ENCODE measurements at regions of chr4 and their contacts with region 1.

Region 1: GRCh38 chr4:90127223-90127705 is at the start of gene CCSER1:
- DNase-seq: peak; percentile 78
- ATAC-seq: peak; percentile 79
- H3K4me3 ChIP-seq: peak within 1 kb of the TSS; percentile 76
- H3K27ac ChIP-seq: 0 out of 2 replicates have a peak within 1 kb of the TSS, but pooled peaks have one; percentile 12
- H3K4me1 ChIP-seq: peaks cover 8% of the 10 kb centered on the region
- H3K27me3 ChIP-seq: peaks cover 32% of the 10 kb centered on the region; the same call in 1 of the 2 replicates
- CTCF ChIP-seq: 0 out of 2 replicates have a peak, but pooled peaks have one; percentile 8
- total RNA-seq, gene CCSER1: 6.0 and 10.1 TPM in 2 replicates

Region 2: DNA sequence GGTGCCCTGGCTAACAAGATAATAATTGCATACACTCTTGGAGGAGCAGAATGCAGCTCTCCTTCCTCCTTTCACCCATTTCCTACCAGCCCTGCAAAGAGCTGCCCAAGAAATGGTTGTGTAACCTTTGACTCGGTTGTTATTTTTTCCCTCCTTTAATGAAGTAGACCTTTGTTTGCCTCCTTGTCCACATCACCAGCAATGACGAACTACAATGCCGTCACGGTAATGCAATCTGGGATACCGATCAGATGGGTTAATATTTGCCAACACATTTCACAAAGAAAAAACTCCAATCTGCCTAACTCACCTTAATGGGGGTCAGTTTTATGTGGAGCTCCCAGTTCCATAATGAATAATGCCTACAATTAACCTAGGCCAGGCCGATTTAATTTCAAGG is 851.7 kb before region 1 on chr4:
- CTCF ChIA-PET with region 1: no interaction called
- POLR2A ChIA-PET with region 1: no interaction called
- intact Hi-C with region 1: no loop called
- DNase-seq: no peak
- ATAC-seq: no peak
- H3K4me3 ChIP-seq: no peak overlapping the region
- H3K27ac ChIP-seq: no peak overlapping the region
- H3K4me1 ChIP-seq: no peaks in the 10 kb centered on the region
- H3K27me3 ChIP-seq: peaks cover 5% of the 10 kb centered on the region; the same call in 1 of the 2 replicates
- CTCF ChIP-seq: no peak

Region 3: DNA sequence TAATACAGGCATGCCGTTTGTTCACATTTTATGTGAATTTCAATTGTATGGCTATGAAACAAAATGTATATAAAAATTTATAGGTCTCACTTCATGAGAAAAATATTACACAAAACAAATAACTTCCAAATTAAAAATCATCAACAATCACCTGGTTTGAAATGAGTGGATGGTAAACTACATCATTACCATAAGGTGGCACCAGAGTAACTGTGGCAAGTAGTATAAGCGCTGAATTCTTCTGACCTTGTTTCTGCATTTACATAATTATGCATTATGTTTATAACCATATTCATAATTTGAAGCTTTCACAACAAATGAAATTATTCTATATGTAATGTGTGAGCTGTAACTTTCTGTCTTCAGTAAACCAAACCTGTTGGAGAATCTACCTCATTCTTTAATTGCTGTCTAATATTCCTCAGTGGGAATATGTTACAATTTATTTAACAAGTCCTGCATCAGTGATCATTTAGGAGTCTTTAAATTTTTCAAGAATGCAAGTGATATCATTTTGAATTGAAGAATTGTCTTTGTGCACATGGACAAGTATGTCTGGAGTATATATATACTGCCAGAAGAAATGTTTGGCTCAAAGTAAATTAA is 177.4 kb before region 1 on chr4:
- CTCF ChIA-PET with region 1: no interaction called
- POLR2A ChIA-PET with region 1: no interaction called
- intact Hi-C with region 1: no loop called
- DNase-seq: peak; percentile 50
- ATAC-seq: 0 out of 2 replicates have a peak, but pooled peaks have one; percentile 50
- H3K4me3 ChIP-seq: no peak overlapping the region
- H3K27ac ChIP-seq: no peak overlapping the region
- H3K4me1 ChIP-seq: no peaks in the 10 kb centered on the region
- H3K27me3 ChIP-seq: peaks cover 59% of the 10 kb centered on the region
- CTCF ChIP-seq: peak; percentile 86

Region 4: GRCh38 chr4:90174611-90175133 is 47.4 kb after region 1 on chr4:
- CTCF ChIA-PET with region 1: no interaction called
- POLR2A ChIA-PET with region 1: no interaction called
- intact Hi-C with region 1: loop called (anchors 2 kb)
- DNase-seq: peak; percentile 90
- ATAC-seq: peak; percentile 88
- H3K4me3 ChIP-seq: peak overlapping the region; percentile 45; the same call in 1 of the 2 replicates
- H3K27ac ChIP-seq: peak overlapping the region; percentile 79
- H3K4me1 ChIP-seq: peaks cover 37% of the 10 kb centered on the region
- H3K27me3 ChIP-seq: no peaks in the 10 kb centered on the region
- CTCF ChIP-seq: no peak

Region 5: DNA sequence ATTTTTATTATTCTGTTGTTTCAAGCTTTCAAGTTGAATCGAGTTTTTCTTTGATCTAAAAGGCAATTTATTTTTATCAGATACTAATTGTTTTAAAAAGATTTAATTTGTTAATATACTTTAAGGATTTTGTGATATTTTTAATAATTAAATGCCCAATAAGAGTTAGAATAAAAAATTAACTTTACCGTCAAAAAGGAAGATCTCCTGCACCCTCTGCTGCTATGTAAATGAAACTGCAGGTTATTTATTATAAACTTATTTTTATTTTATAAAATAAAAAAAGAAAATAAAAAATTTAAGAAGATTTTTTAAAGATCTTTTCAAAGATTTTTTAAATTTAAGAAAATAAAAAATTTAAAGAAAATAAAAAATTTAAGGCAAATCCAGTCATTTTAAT is 166.1 kb after region 1 on chr4:
- CTCF ChIA-PET with region 1: no interaction called
- POLR2A ChIA-PET with region 1: no interaction called
- intact Hi-C with region 1: loop called (anchors 2 kb)
- DNase-seq: peak; percentile 32
- ATAC-seq: no peak
- H3K4me3 ChIP-seq: no peak overlapping the region
- H3K27ac ChIP-seq: no peak overlapping the region
- H3K4me1 ChIP-seq: no peaks in the 10 kb centered on the region
- H3K27me3 ChIP-seq: no peaks in the 10 kb centered on the region
- CTCF ChIP-seq: peak; percentile 21; the same call in 1 of the 2 replicates

Measured in PC-3 (cell line).